CD14-positive monocyte (primary cell): ENCODE measurements at regions of chr5 and their contacts with region 1.

Region 1: GRCh38 chr5:17216176-17216973 is 1.1 kb upstream of the BASP1 start:
- DNase-seq: peak; percentile 69 to 76 (median 73)
- H3K4me3 ChIP-seq: peak overlapping the region; percentile 42 to 92 (median 52)
- H3K4me3 Mint-ChIP-seq: peak overlapping the region; percentile 86 to 92
- H3K27ac ChIP-seq: no peak overlapping the region
- H3K27ac Mint-ChIP-seq: peak overlapping the region; percentile 23 to 86 (median 69)
- H3K4me1 ChIP-seq: peaks cover 20 to 25% of the 10 kb centered on the region in 2 donors
- H3K4me1 Mint-ChIP-seq: peaks cover 29% of the 10 kb centered on the region
- H3K27me3 ChIP-seq: no peaks in the 10 kb centered on the region
- H3K27me3 Mint-ChIP-seq: peaks cover 1 to 4% (median 3%) of the 10 kb centered on the region in 3 donors
- CTCF ChIP-seq: peak; percentile 85

Region 2: GRCh38 chr5:17004441-17005106 is 211.8 kb before region 1 on chr5:
- intact Hi-C with region 1: no loop called
- DNase-seq: no peak
- H3K4me3 ChIP-seq: no peak overlapping the region
- H3K4me3 Mint-ChIP-seq: no peak overlapping the region
- H3K27ac ChIP-seq: no peak overlapping the region
- H3K27ac Mint-ChIP-seq: no peak overlapping the region
- H3K4me1 ChIP-seq: no peaks in the 10 kb centered on the region
- H3K4me1 Mint-ChIP-seq: no peaks in the 10 kb centered on the region
- H3K27me3 ChIP-seq: no peaks in the 10 kb centered on the region
- H3K27me3 Mint-ChIP-seq: peaks cover 2 to 4% (median 3%) of the 10 kb centered on the region in 3 donors
- CTCF ChIP-seq: no peak

Region 3: GRCh38 chr5:17305964-17306716 is 89.8 kb after region 1 on chr5:
- intact Hi-C with region 1: loop called in 1 of 2 experiments (anchors 5 kb)
- DNase-seq: no peak
- H3K4me3 ChIP-seq: no peak overlapping the region
- H3K4me3 Mint-ChIP-seq: no peak overlapping the region
- H3K27ac ChIP-seq: no peak overlapping the region
- H3K27ac Mint-ChIP-seq: peak overlapping the region in 1 of 7 donors; percentile 58
- H3K4me1 ChIP-seq: peaks cover 32 to 40% of the 10 kb centered on the region in 2 donors
- H3K4me1 Mint-ChIP-seq: peaks cover 33% of the 10 kb centered on the region
- H3K27me3 ChIP-seq: no peaks in the 10 kb centered on the region
- H3K27me3 Mint-ChIP-seq: peaks cover 0 to 3% (median 0%) of the 10 kb centered on the region in 3 donors
- CTCF ChIP-seq: no peak

Region 4: DNA sequence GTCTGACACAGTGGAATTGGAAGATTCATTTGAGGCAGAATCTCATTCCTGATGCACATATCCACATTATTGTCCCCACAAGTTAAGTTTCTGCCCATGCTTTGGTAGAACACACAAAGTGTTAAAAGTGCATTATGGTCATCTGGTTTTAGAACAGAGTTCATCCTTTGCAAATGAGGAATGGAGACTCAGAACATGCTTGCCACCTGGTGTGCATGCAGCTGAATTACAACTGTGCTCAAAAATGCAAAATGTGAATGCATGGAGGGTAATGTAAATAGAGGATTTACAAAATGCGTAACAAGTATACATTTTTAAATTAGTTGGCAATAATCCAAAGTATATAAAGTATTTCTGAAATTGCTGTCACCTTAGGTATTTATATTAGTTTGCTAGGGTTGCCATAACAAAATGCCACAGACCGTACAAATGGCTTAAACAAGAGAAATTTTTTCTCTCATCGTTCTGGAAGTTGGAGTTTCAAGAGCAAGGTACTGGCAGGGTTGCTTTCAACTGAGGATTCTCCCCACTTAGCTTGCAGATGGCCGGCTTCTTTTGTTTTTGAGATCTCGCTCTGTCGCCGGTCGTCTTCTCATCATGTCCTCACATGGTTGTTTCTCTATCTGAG is 1089.0 kb after region 1 on chr5:
- intact Hi-C with region 1: loop called in 1 of 2 experiments (anchors 2 kb)
- DNase-seq: peak; percentile 14 to 40 (median 30)
- H3K4me3 ChIP-seq: no peak overlapping the region
- H3K4me3 Mint-ChIP-seq: no peak overlapping the region
- H3K27ac ChIP-seq: no peak overlapping the region
- H3K27ac Mint-ChIP-seq: no peak overlapping the region
- H3K4me1 ChIP-seq: peaks cover 9% of the 10 kb centered on the region in 2 donors
- H3K4me1 Mint-ChIP-seq: peaks cover 12% of the 10 kb centered on the region
- H3K27me3 ChIP-seq: no peaks in the 10 kb centered on the region
- H3K27me3 Mint-ChIP-seq: peaks cover 0 to 2% (median 0%) of the 10 kb centered on the region in 3 donors
- CTCF ChIP-seq: peak; percentile 88

Region 5: GRCh38 chr5:18314192-18314778 is 1097.9 kb after region 1 on chr5:
- intact Hi-C with region 1: loop called (anchors 2 kb)
- DNase-seq: peak; percentile 18 to 42 (median 26)
- H3K4me3 ChIP-seq: no peak overlapping the region
- H3K4me3 Mint-ChIP-seq: no peak overlapping the region
- H3K27ac ChIP-seq: no peak overlapping the region
- H3K27ac Mint-ChIP-seq: no peak overlapping the region
- H3K4me1 ChIP-seq: peaks cover 15% of the 10 kb centered on the region in 2 donors
- H3K4me1 Mint-ChIP-seq: peaks cover 15% of the 10 kb centered on the region
- H3K27me3 ChIP-seq: no peaks in the 10 kb centered on the region
- H3K27me3 Mint-ChIP-seq: peaks cover 0 to 3% (median 2%) of the 10 kb centered on the region in 3 donors
- CTCF ChIP-seq: peak; percentile 83